ENCODE measurements at regions of chr7 and their contacts with region 1.

Region 1: DNA sequence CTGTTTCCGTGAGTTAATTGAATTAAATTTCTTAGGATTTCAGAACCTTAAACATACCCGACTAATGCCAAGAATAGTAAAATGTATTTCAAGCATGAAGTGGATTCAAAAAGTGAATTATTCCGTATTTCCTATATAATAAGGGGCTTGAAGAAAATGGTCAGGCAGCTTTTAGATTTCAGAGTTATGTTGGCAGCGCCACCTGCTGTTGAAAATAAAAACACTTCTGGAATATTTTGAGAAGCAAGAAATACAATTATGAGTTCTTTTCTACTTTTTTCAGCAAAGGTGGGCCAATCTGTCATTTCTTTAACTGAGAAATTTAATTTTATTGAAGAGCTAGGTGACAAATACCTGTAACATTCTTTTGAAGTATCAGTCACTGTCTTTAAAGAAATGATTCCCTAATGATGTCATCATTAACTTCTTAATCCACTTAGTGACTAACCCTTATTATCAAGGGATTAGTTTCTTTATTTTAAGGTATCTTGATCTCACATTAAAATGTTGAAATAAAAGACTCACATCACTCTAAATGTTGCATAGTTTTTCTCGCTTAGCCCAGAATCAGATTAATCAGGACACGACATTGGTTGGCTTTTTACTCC is 36.6 kb upstream of the AGR3 start:
- DNase-seq: peak; percentile 65
- H3K4me3 ChIP-seq: no peak overlapping the region
- H3K27ac ChIP-seq: no peak overlapping the region
- H3K4me1 ChIP-seq: peaks cover 38% of the 10 kb centered on the region
- H3K27me3 ChIP-seq: no peaks in the 10 kb centered on the region

Region 2: GRCh38 chr7:16114633-16115032 is 803.8 kb before region 1 on chr7:
- in situ Hi-C with region 1: loop called (anchors 10 kb)
- DNase-seq: peak; percentile 48
- H3K4me3 ChIP-seq: no peak overlapping the region
- H3K27ac ChIP-seq: no peak overlapping the region
- H3K4me1 ChIP-seq: no peaks in the 10 kb centered on the region
- H3K27me3 ChIP-seq: no peaks in the 10 kb centered on the region

Region 3: GRCh38 chr7:16695621-16696237 is 222.7 kb before region 1 on chr7:
- in situ Hi-C with region 1: loop called (anchors 5 kb)
- DNase-seq: peak; percentile 76
- H3K4me3 ChIP-seq: no peak overlapping the region
- H3K27ac ChIP-seq: no peak overlapping the region
- H3K4me1 ChIP-seq: peaks cover 18% of the 10 kb centered on the region
- H3K27me3 ChIP-seq: no peaks in the 10 kb centered on the region